ENCODE measurements at regions of chr16 and their contacts with region 1.

Region 1: DNA sequence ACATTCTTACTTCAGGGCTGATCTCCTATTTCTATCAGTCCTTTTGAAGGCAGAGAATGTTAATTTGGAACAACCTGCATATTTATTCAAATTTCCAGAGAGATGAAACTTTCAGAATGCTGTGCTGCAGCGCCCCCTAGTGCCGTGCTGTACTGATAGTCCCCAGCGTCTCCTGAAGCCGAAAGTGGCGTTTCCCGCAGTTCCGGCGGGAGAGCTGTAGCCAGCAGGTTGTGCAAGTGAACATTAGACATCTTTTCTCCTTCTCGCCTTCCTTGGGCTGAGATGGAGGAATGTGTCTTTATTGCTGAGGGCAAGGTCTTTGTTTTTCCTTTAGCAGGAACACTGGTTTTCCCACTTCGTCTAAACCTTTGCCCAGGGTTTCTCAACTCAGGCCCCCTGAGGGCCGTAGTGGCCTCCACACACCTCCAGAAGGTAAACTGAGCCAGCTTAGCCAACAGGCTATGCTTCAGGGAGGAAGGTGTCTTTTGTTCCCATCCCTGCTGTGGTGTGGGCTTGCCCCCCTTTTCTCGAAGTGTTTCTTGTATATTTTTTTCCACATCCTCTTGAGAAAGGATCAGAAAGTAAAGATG is 26.4 kb downstream of the USP10 start:
- DNase-seq: peak; percentile 82
- H3K4me3 ChIP-seq: no peak overlapping the region
- H3K27ac ChIP-seq: no peak overlapping the region
- H3K4me1 ChIP-seq: peaks cover 62% of the 10 kb centered on the region
- H3K27me3 ChIP-seq: no peaks in the 10 kb centered on the region
- CTCF ChIP-seq: peak; percentile 88 to 95
- POLR2A ChIP-seq: no peak

Region 2: DNA sequence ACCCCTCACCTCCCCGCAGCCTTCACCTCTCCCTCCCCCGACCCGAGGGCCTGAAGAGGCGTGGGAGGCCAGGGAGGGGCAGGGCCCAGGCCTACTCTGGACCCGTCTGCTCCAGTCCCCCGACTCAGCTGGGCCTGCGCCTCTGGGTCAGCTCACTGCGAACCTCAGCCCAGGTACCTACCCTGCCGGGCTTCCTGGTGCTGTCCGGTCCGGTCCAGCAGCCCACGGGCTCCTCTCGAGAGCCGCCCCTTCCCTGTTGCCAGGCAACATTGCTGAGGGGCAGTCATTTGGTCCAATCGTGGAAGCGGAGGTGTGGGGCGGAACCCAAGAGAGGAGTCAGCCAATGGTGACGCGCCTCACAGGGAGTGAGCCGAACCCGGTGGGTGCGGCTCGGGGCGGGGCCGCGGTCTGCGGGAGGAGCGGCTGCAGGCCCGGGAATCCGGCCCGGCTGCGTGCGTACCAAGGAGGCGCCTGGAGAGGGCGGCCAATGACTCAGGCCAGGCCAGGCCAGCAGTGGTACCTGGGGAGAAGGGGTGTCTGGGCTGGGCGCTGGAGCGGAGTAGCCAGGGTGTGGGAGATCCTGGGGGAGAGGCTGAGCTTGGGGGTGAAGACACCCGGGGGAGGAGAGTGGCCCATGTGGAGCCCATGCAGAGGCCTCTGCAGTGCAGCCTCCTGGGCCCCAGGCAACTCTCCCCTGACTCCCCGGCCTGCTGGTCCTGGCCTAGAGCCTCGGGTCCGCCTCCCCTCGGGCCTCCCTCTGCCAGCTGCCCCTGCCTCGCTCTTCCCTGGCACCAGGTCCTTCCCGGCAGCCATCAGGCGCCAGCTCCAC is 221.5 kb before region 1 on chr16 and contains the start of gene MEAK7:
- CTCF ChIA-PET with region 1: interaction called, 30 read pairs
- POLR2A ChIA-PET with region 1: no interaction called
- dilution Hi-C with region 1: no loop called
- intact Hi-C with region 1: no loop called
- DNase-seq: peak; percentile 98
- H3K4me3 ChIP-seq: peak within 1 kb of the TSS; percentile 61 to 81 (median 62)
- H3K27ac ChIP-seq: peak within 1 kb of the TSS; percentile 38
- H3K4me1 ChIP-seq: peaks cover 10% of the 10 kb centered on the region
- H3K27me3 ChIP-seq: no peaks in the 10 kb centered on the region
- CTCF ChIP-seq: no peak
- POLR2A ChIP-seq: no peak
- total RNA-seq, gene MEAK7: 19.3 and 22.7 TPM in 2 replicates

Region 3: GRCh38 chr16:84629580-84629979 is 96.6 kb before region 1 on chr16:
- CTCF ChIA-PET with region 1: interaction called, 73 read pairs
- POLR2A ChIA-PET with region 1: no interaction called
- dilution Hi-C with region 1: no loop called
- intact Hi-C with region 1: no loop called
- DNase-seq: no peak
- H3K4me3 ChIP-seq: no peak overlapping the region
- H3K27ac ChIP-seq: no peak overlapping the region
- H3K4me1 ChIP-seq: no peaks in the 10 kb centered on the region
- H3K27me3 ChIP-seq: peaks cover 0 to 4% of the 10 kb centered on the region in 2 experiments
- CTCF ChIP-seq: no peak
- POLR2A ChIP-seq: no peak

Region 4: DNA sequence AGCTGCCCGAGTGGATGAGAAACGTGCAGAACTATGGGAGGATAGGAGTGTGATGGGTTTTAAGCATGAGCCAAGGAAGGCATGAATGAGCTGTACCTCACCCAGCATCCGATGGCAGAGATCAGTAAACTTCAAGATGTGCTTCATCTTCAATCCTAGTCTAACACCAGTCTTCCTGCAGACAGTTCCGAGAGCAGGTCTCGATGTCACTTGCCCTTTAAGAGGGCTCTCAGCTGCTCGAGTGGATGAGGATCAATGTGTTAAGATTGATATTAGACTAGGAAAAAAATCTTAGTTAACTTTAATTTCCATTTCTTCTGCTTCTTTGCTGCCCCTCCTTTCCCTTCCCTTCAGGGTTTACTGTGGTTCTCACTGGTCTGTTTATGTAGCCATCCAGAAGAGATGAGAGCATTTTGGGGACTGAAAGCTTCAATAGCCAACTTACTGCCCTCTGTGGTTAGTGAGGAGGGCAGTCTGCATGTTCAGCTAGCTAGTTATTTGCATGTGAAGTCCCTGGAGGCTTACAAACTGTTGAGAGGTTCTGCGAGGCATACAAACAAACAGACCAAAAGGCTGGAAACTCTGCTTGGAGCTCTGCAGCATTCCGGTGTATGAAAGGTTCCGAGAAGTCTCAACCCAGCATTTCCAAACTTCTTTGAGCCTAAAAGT is 62.6 kb before region 1 on chr16:
- CTCF ChIA-PET with region 1: interaction called, 57 read pairs
- POLR2A ChIA-PET with region 1: no interaction called
- dilution Hi-C with region 1: no loop called
- intact Hi-C with region 1: no loop called
- DNase-seq: no peak
- H3K4me3 ChIP-seq: no peak overlapping the region
- H3K27ac ChIP-seq: no peak overlapping the region
- H3K4me1 ChIP-seq: peaks cover 6% of the 10 kb centered on the region
- H3K27me3 ChIP-seq: no peaks in the 10 kb centered on the region
- CTCF ChIP-seq: no peak
- POLR2A ChIP-seq: no peak

Region 5: DNA sequence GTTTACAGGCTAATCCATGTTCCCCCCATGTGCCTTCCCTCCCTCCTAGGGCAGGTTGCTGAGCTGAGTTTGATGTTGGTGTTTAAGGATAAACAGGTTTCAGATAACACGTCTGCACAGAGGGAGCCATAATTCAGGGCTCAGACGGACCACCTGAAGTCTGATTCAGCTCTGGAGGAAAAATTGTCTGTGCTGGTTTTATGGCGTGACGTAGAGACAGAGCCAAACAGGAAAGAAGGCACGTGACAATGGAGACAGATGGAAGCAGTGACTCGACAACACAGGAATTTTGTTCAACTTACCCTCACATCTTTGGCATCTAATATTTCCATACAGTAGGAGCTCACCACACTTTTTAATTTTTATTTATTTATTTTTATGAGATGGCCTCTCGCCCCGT is 37.1 kb before region 1 on chr16:
- CTCF ChIA-PET with region 1: interaction called, 14 read pairs
- POLR2A ChIA-PET with region 1: interaction called, 3 read pairs
- dilution Hi-C with region 1: no loop called
- intact Hi-C with region 1: no loop called
- DNase-seq: peak; percentile 83
- H3K4me3 ChIP-seq: no peak overlapping the region
- H3K27ac ChIP-seq: peak overlapping the region; percentile 69
- H3K4me1 ChIP-seq: peaks cover 14% of the 10 kb centered on the region
- H3K27me3 ChIP-seq: no peaks in the 10 kb centered on the region
- CTCF ChIP-seq: no peak
- POLR2A ChIP-seq: no peak

Region 6: DNA sequence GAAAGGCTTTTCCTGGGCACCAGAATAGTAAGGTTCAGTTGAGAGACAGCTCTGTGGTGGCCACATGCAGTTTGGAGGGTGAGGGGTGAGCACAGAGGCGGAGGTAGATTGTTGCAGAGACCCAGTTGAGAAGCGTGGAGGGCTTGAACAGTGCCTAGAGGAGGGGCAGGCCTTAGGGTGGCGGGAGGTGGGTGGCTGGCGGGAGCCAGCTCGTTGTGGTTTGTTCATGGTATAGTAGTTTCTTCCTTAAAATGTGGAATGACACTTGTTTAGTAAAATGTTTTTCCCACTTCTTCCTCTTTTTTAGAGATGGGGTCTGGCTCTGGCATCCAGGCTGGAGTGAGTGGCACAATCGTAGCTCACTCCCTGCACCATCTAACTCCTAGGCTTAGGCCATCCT is 12.1 kb before region 1 on chr16:
- CTCF ChIA-PET with region 1: interaction called, 39 read pairs
- POLR2A ChIA-PET with region 1: no interaction called
- dilution Hi-C with region 1: no loop called
- intact Hi-C with region 1: no loop called
- DNase-seq: no peak
- H3K4me3 ChIP-seq: no peak overlapping the region
- H3K27ac ChIP-seq: no peak overlapping the region
- H3K4me1 ChIP-seq: peaks cover 8% of the 10 kb centered on the region
- H3K27me3 ChIP-seq: no peaks in the 10 kb centered on the region
- CTCF ChIP-seq: no peak
- POLR2A ChIP-seq: no peak

Region 7: GRCh38 chr16:85126705-85127419 is 400.7 kb after region 1 on chr16:
- CTCF ChIA-PET with region 1: no interaction called
- POLR2A ChIA-PET with region 1: no interaction called
- dilution Hi-C with region 1: no loop called
- intact Hi-C with region 1: no loop called
- DNase-seq: peak; percentile 88
- H3K4me3 ChIP-seq: no peak overlapping the region
- H3K27ac ChIP-seq: no peak overlapping the region
- H3K4me1 ChIP-seq: peaks cover 28% of the 10 kb centered on the region
- H3K27me3 ChIP-seq: no peaks in the 10 kb centered on the region
- CTCF ChIP-seq: no peak
- POLR2A ChIP-seq: no peak

Measured in endothelial cell of umbilical vein (primary cell).